ENCODE measurements at regions of chr5 and their contacts with region 1.

Region 1: GRCh38 chr5:58460732-58461286 is 923 bp upstream of the PLK2 start:
- DNase-seq: peak; percentile 85
- H3K4me3 Mint-ChIP-seq: peak overlapping the region; percentile 74
- H3K27ac Mint-ChIP-seq: peak overlapping the region; percentile 5
- H3K4me1 Mint-ChIP-seq: peaks cover 17% of the 10 kb centered on the region
- H3K27me3 Mint-ChIP-seq: peaks cover 21% of the 10 kb centered on the region

Region 2: DNA sequence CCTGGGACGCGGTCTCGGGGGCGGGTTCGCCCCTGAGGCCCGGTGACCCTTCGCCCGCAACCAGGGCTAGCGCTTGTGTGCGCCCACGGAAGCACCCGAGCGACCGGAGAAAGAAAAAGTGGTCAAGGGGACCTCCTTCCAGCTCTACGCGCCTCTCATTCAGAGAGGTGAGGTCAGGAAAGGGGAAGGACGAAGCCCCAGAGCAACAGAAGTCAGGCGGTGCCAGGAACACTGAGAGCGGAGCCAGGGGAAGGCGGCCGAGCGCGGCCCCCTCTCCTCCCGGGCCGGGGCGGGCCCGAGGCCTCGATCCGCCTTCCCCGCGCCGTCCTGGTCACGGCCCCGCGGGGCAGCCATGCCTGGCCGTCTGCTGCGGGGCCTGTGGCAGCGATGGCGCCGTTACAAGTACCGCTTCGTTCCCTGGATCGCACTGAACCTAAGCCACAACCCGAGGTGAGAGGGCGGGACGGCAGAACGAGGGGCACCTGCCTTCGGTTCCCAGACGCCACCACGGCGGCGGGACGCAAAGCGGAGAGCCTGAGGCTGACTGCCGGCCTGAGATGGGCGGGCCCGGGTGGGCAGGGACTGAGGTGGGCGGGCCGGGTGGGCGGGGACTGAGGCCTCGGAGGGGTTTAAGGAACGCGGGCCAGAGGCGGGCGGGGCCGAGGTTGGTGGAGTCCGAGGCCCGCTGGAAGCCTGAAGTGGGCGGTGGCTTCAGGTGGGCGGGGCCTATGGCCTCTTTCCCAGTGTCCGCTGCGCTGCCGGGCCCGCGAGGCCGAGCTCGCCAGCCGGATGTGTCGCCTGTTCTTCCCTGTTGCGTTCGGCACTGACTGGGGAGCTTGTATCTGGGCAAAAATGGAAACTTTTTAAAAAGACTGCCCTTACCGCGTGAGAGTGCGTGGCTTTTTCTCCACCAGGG is 1551.3 kb before region 1 on chr5 and contains the start of gene SETD9:
- intact Hi-C with region 1: loop called (anchors 1 kb)
- DNase-seq: peak; percentile 91
- H3K4me3 Mint-ChIP-seq: peak within 1 kb of the TSS; percentile 86
- H3K27ac Mint-ChIP-seq: peak within 1 kb of the TSS; percentile 96
- H3K4me1 Mint-ChIP-seq: peaks cover 22% of the 10 kb centered on the region
- H3K27me3 Mint-ChIP-seq: peaks cover 10% of the 10 kb centered on the region
- total RNA-seq, gene SETD9: 11.0 and 13.1 TPM in 2 replicates

Region 3: DNA sequence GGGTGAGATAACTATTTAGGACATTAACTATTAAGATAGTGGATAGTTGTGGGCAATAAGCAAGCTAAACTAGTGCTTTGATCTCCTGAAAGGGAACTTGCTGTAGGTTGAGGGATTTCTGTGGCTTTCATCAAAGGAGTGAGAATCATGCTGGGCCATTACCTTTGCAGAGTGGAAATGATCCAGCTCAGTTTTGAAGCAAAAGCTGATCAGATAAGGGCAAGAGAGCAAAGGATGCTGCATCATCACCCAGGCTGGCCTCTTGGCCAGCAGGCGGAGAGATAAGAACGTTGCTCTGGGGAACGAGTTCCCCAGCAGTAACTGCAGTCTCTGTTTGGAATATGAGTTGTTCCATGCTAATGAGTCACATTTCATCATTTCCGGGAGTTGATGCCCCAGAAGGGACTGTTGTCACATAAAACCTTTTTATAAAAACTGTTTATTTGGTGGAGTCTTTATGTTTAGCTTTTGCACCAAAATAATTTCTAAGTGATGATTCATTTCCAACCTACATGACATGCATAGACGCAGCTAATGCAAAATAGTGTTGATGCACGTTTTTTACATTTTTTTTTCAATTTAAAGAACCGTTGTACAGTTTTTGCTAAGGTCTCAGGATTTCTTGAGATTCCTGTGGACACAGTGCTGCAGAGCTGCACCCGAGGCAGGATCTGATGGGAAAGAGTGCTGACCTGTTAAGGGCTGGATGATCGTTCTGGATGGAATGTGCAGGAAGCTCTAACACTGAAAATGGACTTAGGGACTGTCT is 1077.5 kb before region 1 on chr5:
- intact Hi-C with region 1: loop called (anchors 1 kb)
- DNase-seq: peak; percentile 46
- H3K4me3 Mint-ChIP-seq: no peak overlapping the region
- H3K27ac Mint-ChIP-seq: peak overlapping the region; percentile 19
- H3K4me1 Mint-ChIP-seq: peaks cover 18% of the 10 kb centered on the region
- H3K27me3 Mint-ChIP-seq: peaks cover 2% of the 10 kb centered on the region

Region 4: GRCh38 chr5:57499262-57500050 is 961.4 kb before region 1 on chr5:
- intact Hi-C with region 1: loop called (anchors 1 kb)
- DNase-seq: peak; percentile 20
- H3K4me3 Mint-ChIP-seq: peak overlapping the region; percentile 37
- H3K27ac Mint-ChIP-seq: peak overlapping the region; percentile 60
- H3K4me1 Mint-ChIP-seq: peaks cover 54% of the 10 kb centered on the region
- H3K27me3 Mint-ChIP-seq: peaks cover 4% of the 10 kb centered on the region

Region 5: DNA sequence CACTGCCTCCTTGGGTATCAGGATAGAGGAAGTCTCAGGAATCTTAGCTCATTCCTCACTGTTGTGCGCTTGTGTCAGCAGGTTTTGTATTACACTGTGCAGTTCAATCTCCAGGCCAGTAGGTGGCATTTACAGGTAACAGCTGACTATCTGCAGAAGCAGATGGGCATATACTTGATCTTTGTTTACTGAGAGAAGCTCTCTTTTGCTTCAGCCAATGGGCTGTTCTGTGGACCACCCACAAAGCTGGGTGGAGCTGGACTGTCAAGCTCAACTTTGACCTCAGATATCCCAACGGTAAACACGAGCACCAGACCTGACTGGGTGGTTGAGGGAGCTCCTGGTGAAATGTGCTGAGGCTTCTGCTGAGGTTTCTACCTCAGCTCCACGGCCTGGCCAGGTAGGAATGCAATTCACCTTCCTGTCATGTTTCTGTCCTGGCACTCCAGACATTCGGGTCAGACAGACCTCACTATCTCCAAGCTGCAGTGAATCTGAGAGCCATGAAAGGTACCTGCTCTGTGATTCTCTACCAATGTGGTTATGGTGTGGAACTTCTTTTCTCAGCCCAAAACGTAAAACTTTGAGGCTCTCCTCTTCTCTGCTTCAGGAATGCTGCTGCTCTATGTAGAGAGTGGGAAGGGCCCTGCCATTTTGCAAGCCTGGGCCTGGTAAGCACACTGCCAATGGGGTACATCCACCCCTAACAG is 810.3 kb before region 1 on chr5:
- intact Hi-C with region 1: loop called (anchors 1 kb)
- DNase-seq: no peak
- H3K4me3 Mint-ChIP-seq: no peak overlapping the region
- H3K27ac Mint-ChIP-seq: no peak overlapping the region
- H3K4me1 Mint-ChIP-seq: no peaks in the 10 kb centered on the region
- H3K27me3 Mint-ChIP-seq: peaks cover 20% of the 10 kb centered on the region

Region 6: GRCh38 chr5:57779383-57780223 is 681.2 kb before region 1 on chr5:
- intact Hi-C with region 1: loop called (anchors 2 kb)
- DNase-seq: no peak
- H3K4me3 Mint-ChIP-seq: no peak overlapping the region
- H3K27ac Mint-ChIP-seq: no peak overlapping the region
- H3K4me1 Mint-ChIP-seq: no peaks in the 10 kb centered on the region
- H3K27me3 Mint-ChIP-seq: peaks cover 16% of the 10 kb centered on the region

Region 7: GRCh38 chr5:58491216-58491892 is 30.5 kb after region 1 on chr5 and contains the start of gene GAPT:
- intact Hi-C with region 1: no loop called
- DNase-seq: no peak
- H3K4me3 Mint-ChIP-seq: no peak within 1 kb of the TSS
- H3K27ac Mint-ChIP-seq: no peak within 1 kb of the TSS
- H3K4me1 Mint-ChIP-seq: peaks cover 2% of the 10 kb centered on the region
- H3K27me3 Mint-ChIP-seq: peaks cover 28% of the 10 kb centered on the region
- total RNA-seq, gene GAPT: not detected in 2 replicates